ENCODE measurements at regions of chr6 and their contacts with region 1.

Region 1: DNA sequence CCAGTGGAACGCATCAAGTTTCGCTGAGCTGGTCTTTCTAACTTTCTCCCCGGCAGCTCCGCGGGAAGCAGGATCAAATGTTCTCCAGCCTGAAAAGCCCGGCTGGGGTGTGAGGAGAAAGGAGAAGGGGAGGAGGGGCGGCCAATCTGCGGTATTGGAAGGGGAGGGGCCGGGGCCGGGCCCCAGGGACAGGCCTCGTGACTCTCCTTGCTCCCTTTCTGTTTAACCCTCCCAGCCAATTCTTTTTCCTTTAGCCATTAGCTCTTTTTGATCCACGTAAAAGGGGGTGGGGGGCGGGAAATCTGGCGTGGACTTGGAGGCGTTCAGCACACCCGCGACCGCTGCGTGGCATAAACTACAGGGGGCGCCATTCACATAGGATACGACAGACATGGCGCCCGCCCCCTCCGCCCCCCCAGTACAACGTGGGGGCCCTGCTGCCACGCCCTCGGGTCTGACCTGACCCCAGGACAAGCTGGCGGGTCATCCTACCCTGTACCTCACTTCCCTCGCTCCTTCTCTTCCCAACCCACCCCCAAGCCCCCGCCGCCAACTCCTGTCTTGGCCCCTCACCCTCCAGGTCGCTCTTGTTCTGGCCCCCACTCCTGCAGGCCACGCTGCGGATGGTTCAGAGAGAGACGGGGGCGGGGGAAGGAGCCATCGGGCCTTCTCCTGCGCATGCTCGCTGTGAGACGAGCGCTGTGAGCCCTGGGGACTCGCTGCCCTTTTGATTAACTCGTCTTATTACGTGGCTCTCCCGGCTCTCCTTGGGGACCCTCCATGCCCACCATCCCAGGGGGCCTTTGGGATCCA is 7.8 kb upstream of the MDGA1 start:
- DNase-seq: peak; percentile 41
- H3K4me3 Mint-ChIP-seq: peak overlapping the region; percentile 50
- H3K27ac Mint-ChIP-seq: no peak overlapping the region
- H3K4me1 Mint-ChIP-seq: peaks cover 11% of the 10 kb centered on the region
- H3K27me3 Mint-ChIP-seq: peaks cover 25% of the 10 kb centered on the region

Region 2: GRCh38 chr6:37630281-37630799 is 75.1 kb before region 1 on chr6:
- CTCF ChIA-PET with region 1: no interaction called
- POLR2A ChIA-PET with region 1: no interaction called
- DNase-seq: no peak
- H3K4me3 Mint-ChIP-seq: no peak overlapping the region
- H3K27ac Mint-ChIP-seq: no peak overlapping the region
- H3K4me1 Mint-ChIP-seq: peaks cover 5% of the 10 kb centered on the region
- H3K27me3 Mint-ChIP-seq: peaks cover 10% of the 10 kb centered on the region

Region 3: GRCh38 chr6:37691904-37692806 is 13.3 kb before region 1 on chr6:
- CTCF ChIA-PET with region 1: interaction called, 10 read pairs
- POLR2A ChIA-PET with region 1: interaction called, 3 read pairs
- DNase-seq: peak; percentile 79
- H3K4me3 Mint-ChIP-seq: no peak overlapping the region
- H3K27ac Mint-ChIP-seq: no peak overlapping the region
- H3K4me1 Mint-ChIP-seq: peaks cover 14% of the 10 kb centered on the region
- H3K27me3 Mint-ChIP-seq: peaks cover 59% of the 10 kb centered on the region